ENCODE measurements at regions of chr13 and their contacts with region 1.

Region 1: GRCh38 chr13:33542283-33543088 is 256.9 kb upstream of the STARD13 start:
- DNase-seq: peak; percentile 99

Region 2: GRCh38 chr13:33110713-33111413 is 431.6 kb before region 1 on chr13:
- intact Hi-C with region 1: loop called (anchors 1 kb)
- DNase-seq: peak; percentile 77

Region 3: DNA sequence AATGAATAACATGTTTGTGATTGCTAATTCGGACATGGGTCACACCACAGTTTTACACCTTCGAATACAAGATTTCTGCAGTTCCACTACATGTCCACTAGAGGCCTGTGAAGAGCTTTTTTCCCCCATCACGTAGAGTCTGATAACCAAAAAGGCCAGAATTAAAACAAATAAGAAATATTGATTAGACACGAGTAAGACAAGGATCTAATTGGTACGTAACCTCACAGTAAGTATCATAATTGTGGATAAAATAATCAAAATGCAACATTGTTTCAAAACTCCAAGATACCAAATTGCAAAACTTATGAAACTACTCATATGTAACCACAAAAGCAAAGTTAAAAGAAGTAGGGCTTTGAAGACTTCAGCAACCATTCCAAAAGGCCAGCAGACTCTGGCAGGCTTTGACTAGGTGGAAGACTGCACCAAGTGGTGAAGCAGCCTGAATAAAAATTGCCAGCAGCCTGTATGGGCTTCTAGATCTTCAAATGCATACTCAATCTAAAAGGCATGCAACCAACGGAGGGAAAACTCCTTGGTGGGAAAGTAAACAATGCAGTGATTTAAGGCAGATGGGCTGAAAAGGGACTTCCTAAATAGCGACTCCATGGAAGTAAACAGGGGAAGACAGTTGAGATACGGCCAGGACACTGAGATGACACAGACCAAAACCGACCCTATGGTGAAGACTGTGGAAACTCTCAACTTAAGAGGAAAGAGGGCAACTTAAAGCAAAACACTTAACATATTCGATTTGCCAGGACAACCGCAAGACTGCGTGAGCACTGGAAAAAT is 313.6 kb before region 1 on chr13:
- intact Hi-C with region 1: loop called (anchors 5 kb)
- DNase-seq: no peak

Region 4: DNA sequence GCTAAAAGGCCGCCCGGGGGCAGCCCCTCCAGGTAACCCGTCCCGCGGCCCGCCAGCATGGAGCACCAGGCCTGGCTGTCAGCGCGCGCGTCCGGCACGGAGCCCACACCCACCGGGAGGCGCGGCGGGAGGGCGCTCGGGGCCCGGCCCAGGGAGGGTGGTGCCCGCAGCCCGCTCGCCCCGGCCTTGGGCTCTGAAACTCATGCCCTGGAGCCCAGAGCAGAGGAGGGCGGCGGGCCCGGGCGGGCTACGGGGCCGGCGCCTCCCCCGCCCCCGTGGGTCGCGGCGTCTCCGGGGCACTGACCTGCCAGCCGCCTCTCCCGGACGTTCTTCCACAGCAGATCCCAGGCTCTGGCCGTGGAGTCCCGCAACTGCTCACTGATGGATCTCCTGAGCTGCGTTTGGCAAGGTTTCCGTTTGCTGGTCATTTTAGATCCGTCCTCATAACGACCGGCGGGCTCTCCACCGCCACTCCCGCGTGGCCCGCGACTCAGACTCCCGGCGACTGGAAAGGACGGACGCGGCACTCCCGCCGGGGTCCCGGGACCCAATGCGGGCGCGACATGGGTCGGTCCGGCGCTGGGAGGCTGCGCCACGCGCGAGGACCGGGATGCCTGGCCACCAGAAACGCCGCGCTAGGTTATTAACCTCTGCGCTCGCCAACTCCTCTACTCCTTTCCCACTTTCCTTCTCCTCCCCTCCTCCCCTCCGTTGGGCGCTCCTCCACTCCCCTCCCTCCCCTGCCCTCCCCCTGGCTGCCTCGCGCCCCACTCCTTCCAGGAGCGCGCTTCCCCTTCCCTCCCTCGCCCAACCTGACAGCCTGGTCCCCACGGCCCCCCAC is 192.3 kb before region 1 on chr13:
- intact Hi-C with region 1: loop called (anchors 5 kb)
- DNase-seq: no peak

Region 5: DNA sequence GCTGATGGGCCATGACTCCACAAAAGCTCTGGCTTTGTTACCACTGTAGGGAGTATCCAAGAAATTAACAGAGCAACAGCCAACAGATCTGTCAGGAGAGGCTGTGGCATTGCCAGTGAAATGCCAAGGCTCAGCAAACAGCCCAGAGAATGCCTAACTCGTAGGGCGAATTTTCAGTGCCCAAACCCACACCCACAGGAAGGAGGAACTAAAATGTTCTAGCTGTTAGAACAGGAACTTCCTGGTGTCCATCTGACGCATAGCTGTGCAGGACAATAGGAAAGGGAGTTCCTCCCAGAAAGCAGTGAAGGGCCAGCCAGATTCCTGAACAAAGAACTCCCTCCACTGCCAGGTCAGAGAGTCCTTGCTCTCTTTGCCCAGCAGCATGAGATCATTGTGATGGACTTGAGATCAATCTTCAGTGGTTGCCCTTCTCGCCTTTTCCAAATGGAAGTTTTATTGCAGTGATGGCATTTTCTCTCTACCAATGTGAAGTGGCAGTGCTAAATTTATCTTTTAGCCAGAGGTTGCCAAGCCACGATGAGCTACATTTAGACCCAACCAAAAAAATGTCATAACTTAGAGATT is 32.8 kb before region 1 on chr13:
- intact Hi-C with region 1: loop called (anchors 2 kb)
- DNase-seq: no peak

Region 6: GRCh38 chr13:33690354-33690753 is 147.9 kb after region 1 on chr13:
- intact Hi-C with region 1: no loop called
- DNase-seq: no peak

Region 7: GRCh38 chr13:33710924-33711323 is 168.4 kb after region 1 on chr13:
- intact Hi-C with region 1: no loop called
- DNase-seq: no peak

Region 8: GRCh38 chr13:33723772-33724435 is 181.4 kb after region 1 on chr13:
- intact Hi-C with region 1: loop called (anchors 2 kb)
- DNase-seq: peak; percentile 84